MCF 10A (cell line): ENCODE measurements at regions of chr7 and their contacts with region 1.

Region 1: DNA sequence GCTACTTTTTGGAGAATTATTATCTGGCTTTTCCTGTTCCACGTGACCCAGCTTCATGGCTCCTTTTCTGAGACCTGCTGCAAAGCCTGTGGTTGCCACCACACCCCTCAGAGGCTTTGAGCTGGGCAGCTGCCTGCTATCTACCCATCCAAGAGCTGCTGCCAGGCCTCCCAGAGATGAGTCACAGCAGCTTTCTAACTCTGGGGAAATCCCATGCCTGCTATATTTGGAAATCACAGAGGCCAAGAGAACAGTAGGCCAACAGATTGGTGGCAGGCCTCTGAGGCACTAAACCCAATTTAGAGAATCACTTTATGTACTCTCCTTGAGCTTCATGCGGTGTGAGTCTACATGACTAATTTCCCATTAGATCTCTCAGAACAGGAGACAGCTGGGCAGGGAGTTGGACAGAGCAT is 35.2 kb downstream of the SGCE start:
- DNase-seq: peak; percentile 97
- H3K4me3 Mint-ChIP-seq: no peak overlapping the region
- H3K27ac Mint-ChIP-seq: peak overlapping the region; percentile 75
- H3K4me1 Mint-ChIP-seq: peaks cover 13% of the 10 kb centered on the region
- H3K27me3 Mint-ChIP-seq: no peaks in the 10 kb centered on the region
- CTCF ChIP-seq: no peak

Region 2: DNA sequence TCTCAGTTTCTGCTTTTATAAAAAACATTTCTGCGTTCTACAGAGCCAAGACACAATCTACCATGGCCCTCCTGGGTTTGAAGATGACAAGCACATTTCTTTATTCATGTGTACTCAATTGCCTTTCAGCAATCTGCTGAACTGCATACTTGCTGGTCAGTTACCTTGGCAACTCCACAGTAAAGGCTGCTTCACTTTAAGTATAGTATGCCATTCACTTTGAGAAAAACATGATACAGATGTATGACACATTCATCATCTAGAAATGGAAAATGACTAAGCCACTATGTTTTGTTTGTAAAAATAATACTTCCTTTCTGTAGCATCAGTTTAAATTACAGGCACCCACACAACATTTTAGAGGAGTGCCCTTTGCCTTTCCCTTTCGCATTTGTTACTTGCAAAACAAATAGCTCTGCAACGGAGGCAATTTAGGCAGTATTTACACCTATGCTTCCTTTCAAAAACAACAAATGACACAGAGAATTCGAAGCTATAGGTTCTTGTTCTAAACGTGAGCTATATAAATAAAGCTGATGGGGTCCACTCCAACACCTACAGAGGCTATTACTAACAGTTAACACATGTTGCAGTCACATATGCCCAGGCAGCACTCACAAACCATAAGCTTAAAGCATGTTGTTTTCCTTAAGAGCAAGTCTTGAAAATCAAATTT is 11.8 kb after region 1 on chr7:
- CTCF ChIA-PET with region 1: interaction called, 4 read pairs
- POLR2A ChIA-PET with region 1: interaction called, 17 read pairs
- intact Hi-C with region 1: no loop called
- DNase-seq: peak; percentile 59
- H3K4me3 Mint-ChIP-seq: no peak overlapping the region
- H3K27ac Mint-ChIP-seq: peak overlapping the region; percentile 16
- H3K4me1 Mint-ChIP-seq: peaks cover 16% of the 10 kb centered on the region
- H3K27me3 Mint-ChIP-seq: no peaks in the 10 kb centered on the region
- CTCF ChIP-seq: no peak

Region 3: GRCh38 chr7:95199779-95200558 is 579.3 kb after region 1 on chr7:
- CTCF ChIA-PET with region 1: interaction called, 11 read pairs
- POLR2A ChIA-PET with region 1: no interaction called
- intact Hi-C with region 1: no loop called
- DNase-seq: peak; percentile 68
- H3K4me3 Mint-ChIP-seq: no peak overlapping the region
- H3K27ac Mint-ChIP-seq: no peak overlapping the region
- H3K4me1 Mint-ChIP-seq: no peaks in the 10 kb centered on the region
- H3K27me3 Mint-ChIP-seq: peaks cover 17% of the 10 kb centered on the region
- CTCF ChIP-seq: peak; percentile 48